A549 (cell line): ENCODE measurements at regions of chr12 and their contacts with region 1.

Region 1: DNA sequence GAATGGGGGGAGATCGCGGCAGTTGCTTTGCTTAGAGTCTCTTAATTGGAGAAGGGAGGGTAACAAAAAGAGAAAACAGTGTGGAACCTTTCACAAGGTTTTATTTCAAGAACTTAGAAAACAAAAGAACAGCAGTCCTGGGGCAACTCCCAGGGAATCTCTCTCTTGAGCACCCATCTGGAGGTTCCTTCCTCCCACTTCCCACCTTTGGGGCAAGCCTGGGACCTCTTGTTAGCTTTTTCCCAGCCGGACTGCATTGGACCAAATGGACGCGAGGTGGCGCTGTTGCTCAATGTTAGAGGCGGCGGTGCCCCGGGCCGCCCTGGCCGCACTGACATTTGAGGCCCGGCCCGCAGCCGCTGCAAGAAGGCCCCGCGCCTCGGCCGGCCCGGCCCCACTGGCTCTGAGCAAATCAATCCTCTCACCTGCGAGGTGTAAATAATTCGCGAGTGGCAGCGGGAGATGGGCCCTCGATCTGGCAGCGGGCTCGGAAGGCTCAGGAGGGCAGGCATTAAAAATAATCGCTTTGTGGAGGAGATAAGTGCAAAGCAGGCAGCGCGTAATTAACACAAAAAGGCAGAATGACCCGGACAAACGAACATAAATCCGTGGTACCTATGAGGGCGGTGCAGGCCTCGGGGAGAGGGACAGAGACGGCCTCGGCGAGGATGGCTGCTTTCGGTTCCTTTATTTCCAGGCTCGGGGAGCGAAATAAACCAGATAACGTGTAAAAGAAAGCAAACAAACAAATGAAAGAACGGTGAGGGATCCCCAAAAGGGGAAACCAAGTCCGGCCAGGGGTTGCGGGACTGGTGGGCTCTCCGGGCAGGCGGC is 2.7 kb upstream of the HOXC8 start:
- DNase-seq: peak; percentile 82 to 86
- ATAC-seq: peak; percentile 59 to 82
- H3K4me3 ChIP-seq: no peak overlapping the region
- H3K27ac ChIP-seq: peak overlapping the region in 1 of 2 experiments; percentile 74; a peak in 3 of 6 replicates
- H3K4me1 ChIP-seq: peaks cover 19% of the 10 kb centered on the region
- CTCF ChIP-seq: peak; percentile 93
- EP300 ChIP-seq: no peak
- POLR2A ChIP-seq: no peak
- RAD21 ChIP-seq: peak; percentile 97 to 98

Region 2: DNA sequence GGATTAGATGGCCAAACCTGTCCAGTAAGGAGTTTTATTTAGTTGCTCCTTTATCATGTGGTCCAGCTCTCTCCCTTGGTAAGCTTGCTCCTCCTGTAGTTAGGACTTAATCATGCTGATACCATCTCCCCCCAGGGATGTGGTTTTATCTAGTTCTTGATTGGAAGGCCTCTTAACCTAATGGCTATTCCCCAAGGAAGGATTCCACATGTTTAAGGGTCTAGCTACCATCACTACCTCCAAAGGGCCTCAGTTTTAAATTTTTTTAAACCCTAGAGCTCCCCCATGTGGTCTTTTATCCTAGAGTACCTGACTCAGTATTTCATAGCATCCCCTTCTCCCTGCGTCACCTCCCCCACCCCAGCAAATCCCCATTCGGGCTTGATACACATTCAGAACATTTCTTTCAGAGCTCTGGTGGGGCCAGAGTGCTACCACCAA is 529.3 kb before region 1 on chr12:
- CTCF ChIA-PET with region 1: no interaction called
- POLR2A ChIA-PET with region 1: no interaction called
- DNase-seq: no peak
- ATAC-seq: peak; percentile 47 to 64
- H3K4me3 ChIP-seq: no peak overlapping the region
- H3K27ac ChIP-seq: no peak overlapping the region
- H3K4me1 ChIP-seq: peaks cover 66% of the 10 kb centered on the region
- CTCF ChIP-seq: peak; percentile 57
- EP300 ChIP-seq: no peak
- POLR2A ChIP-seq: no peak
- RAD21 ChIP-seq: peak; percentile 24 to 44; a peak in 4 of 5 replicates

Region 3: DNA sequence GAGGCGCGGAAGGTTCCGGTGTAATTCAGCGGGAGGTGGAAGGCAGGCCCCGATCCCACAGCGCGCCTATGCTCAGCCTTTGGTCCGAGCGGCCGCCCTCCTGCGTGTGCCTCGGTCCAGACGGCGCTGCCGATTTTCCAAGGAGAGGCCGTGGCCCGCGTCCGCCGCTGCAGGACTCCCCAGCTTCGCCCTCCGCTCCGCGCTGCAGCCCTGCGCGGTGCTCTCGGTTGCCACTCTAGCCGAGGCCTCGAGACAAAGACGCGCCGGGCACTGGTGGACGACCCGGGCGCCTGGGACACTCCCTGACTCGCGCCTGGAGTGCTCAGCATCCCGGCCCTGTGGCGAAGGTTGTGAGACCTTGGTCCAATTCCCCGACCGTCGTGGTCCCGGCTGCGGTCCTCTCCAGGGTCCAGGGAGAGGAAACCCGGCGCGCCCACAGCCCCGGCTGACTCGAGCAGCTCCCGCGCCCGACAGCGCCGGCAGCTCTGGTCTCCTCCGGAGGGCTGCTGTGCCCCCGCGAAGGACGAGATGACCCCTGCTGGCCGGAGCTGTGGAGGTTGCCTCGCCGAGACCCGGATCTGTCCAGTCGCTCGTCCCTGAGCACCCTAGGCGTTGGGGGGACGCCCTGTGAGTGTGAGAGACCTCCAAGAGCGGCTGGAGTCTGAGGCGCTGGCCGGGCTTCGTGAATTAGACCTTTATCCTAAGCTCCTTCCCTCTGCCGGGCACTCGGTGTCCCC is 44.9 kb before region 1 on chr12:
- CTCF ChIA-PET with region 1: no interaction called
- POLR2A ChIA-PET with region 1: no interaction called
- DNase-seq: no peak
- ATAC-seq: peak; percentile 41 to 83; a peak in 4 of 6 replicates
- H3K4me3 ChIP-seq: no peak overlapping the region
- H3K27ac ChIP-seq: no peak overlapping the region
- H3K4me1 ChIP-seq: peaks cover 9% of the 10 kb centered on the region; the same call in 1 of the 3 replicates
- CTCF ChIP-seq: no peak
- EP300 ChIP-seq: no peak
- POLR2A ChIP-seq: no peak
- RAD21 ChIP-seq: peak; percentile 26 to 42; a peak in 3 of 5 replicates

Region 4: GRCh38 chr12:53994264-53995001 is 11.6 kb before region 1 on chr12:
- CTCF ChIA-PET with region 1: interaction called, 22 read pairs
- POLR2A ChIA-PET with region 1: interaction called, 11 read pairs
- DNase-seq: no peak
- ATAC-seq: no peak
- H3K4me3 ChIP-seq: no peak overlapping the region
- H3K27ac ChIP-seq: peak overlapping the region; percentile 78 to 89; a peak in 5 of 6 replicates
- H3K4me1 ChIP-seq: peaks cover 20% of the 10 kb centered on the region
- CTCF ChIP-seq: no peak
- EP300 ChIP-seq: no peak
- POLR2A ChIP-seq: no peak
- RAD21 ChIP-seq: no peak